Endothelial cell of umbilical vein (primary cell): ENCODE measurements at regions of chr17 and their contacts with region 1.

Region 1: GRCh38 chr17:65100316-65101140 is 36.6 kb upstream of the RGS9 start:
- DNase-seq: peak; percentile 66
- H3K4me3 ChIP-seq: peak overlapping the region; percentile 20 to 37 (median 32)
- H3K27ac ChIP-seq: no peak overlapping the region
- H3K4me1 ChIP-seq: peaks cover 8% of the 10 kb centered on the region
- H3K27me3 ChIP-seq: peaks cover 0 to 5% of the 10 kb centered on the region in 2 experiments
- CTCF ChIP-seq: peak; percentile 82 to 88
- POLR2A ChIP-seq: no peak

Region 2: GRCh38 chr17:64773836-64774761 is 326.4 kb before region 1 on chr17:
- CTCF ChIA-PET with region 1: no interaction called
- POLR2A ChIA-PET with region 1: no interaction called
- dilution Hi-C with region 1: no loop called
- intact Hi-C with region 1: no loop called
- DNase-seq: peak; percentile 40
- H3K4me3 ChIP-seq: no peak overlapping the region
- H3K27ac ChIP-seq: no peak overlapping the region
- H3K4me1 ChIP-seq: peaks cover 22% of the 10 kb centered on the region
- H3K27me3 ChIP-seq: no peaks in the 10 kb centered on the region
- CTCF ChIP-seq: peak; percentile 30 to 56
- POLR2A ChIP-seq: no peak

Region 3: GRCh38 chr17:64984851-64985521 is 115.5 kb before region 1 on chr17:
- CTCF ChIA-PET with region 1: no interaction called
- POLR2A ChIA-PET with region 1: no interaction called
- dilution Hi-C with region 1: no loop called
- intact Hi-C with region 1: no loop called
- DNase-seq: peak; percentile 34
- H3K4me3 ChIP-seq: no peak overlapping the region
- H3K27ac ChIP-seq: no peak overlapping the region
- H3K4me1 ChIP-seq: no peaks in the 10 kb centered on the region
- H3K27me3 ChIP-seq: no peaks in the 10 kb centered on the region
- CTCF ChIP-seq: no peak
- POLR2A ChIP-seq: no peak

Region 4: DNA sequence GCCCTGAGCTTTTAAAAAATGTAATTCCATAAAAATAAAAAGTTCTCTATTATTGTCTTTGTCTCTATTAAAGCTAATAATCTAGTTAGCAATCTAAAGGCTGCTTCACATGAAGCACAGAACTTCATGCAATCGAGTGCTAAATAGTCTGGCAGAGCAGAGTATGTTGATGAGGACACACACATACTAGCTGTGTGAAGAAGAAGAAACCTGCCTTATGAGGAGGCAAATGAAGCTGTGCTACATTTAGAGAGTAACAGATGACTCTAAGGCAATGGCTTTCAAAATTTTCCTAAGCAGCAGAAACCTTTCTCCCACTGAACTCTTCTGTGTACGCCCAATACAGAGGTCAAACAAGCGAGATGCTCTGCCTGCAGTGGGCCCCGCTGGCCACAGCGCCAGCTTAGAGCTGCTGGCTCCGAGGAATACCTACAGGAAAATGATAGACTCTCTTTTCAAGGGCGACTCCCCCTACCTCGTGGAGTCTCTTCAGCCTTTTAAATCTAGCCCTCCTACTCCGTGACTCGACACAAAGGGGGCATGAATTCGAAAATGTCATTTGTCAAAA is 83.2 kb before region 1 on chr17:
- CTCF ChIA-PET with region 1: interaction called, 3 read pairs
- POLR2A ChIA-PET with region 1: no interaction called
- dilution Hi-C with region 1: no loop called
- intact Hi-C with region 1: loop called (anchors 5 kb)
- DNase-seq: no peak
- H3K4me3 ChIP-seq: no peak overlapping the region
- H3K27ac ChIP-seq: no peak overlapping the region
- H3K4me1 ChIP-seq: no peaks in the 10 kb centered on the region
- H3K27me3 ChIP-seq: no peaks in the 10 kb centered on the region
- CTCF ChIP-seq: no peak
- POLR2A ChIP-seq: no peak

Region 5: DNA sequence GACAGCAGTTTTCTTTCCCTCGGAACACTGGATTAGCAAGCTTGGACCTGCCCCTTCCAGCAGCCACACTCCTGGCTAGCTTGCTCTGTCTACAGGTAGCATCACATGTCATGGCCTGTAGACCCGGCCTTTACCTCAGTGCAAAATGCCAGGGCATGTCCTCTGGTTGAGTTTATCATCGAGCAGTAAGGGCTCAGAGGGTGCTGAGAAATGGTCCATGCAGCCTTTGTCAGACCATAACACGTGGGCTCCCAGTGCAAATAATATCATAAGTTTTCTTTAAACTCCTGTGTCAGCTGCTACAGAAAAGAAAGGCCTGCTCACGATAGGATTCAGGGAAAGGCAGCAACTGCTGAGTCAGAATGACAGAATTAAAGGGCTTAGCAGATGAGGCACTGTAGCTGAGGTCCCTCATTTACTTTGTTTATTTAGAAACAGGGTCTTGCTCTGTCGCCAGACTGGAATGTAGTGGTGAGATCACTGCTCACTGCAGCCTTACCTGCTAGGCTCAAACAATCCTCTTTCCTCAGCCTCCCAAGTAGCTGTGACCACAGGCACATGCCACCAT is 36.0 kb before region 1 on chr17:
- CTCF ChIA-PET with region 1: interaction called, 17 read pairs
- POLR2A ChIA-PET with region 1: interaction called, 9 read pairs
- dilution Hi-C with region 1: no loop called
- intact Hi-C with region 1: no loop called
- DNase-seq: no peak
- H3K4me3 ChIP-seq: no peak overlapping the region
- H3K27ac ChIP-seq: no peak overlapping the region
- H3K4me1 ChIP-seq: no peaks in the 10 kb centered on the region
- H3K27me3 ChIP-seq: peaks cover 9 to 10% of the 10 kb centered on the region in 2 experiments
- CTCF ChIP-seq: no peak
- POLR2A ChIP-seq: no peak

Region 6: GRCh38 chr17:65085397-65085796 is 15.1 kb before region 1 on chr17:
- CTCF ChIA-PET with region 1: interaction called, 43 read pairs
- POLR2A ChIA-PET with region 1: no interaction called
- dilution Hi-C with region 1: no loop called
- intact Hi-C with region 1: no loop called
- DNase-seq: no peak
- H3K4me3 ChIP-seq: no peak overlapping the region
- H3K27ac ChIP-seq: no peak overlapping the region
- H3K4me1 ChIP-seq: no peaks in the 10 kb centered on the region
- H3K27me3 ChIP-seq: peaks cover 31 to 37% of the 10 kb centered on the region in 2 experiments
- CTCF ChIP-seq: no peak
- POLR2A ChIP-seq: no peak

Region 7: DNA sequence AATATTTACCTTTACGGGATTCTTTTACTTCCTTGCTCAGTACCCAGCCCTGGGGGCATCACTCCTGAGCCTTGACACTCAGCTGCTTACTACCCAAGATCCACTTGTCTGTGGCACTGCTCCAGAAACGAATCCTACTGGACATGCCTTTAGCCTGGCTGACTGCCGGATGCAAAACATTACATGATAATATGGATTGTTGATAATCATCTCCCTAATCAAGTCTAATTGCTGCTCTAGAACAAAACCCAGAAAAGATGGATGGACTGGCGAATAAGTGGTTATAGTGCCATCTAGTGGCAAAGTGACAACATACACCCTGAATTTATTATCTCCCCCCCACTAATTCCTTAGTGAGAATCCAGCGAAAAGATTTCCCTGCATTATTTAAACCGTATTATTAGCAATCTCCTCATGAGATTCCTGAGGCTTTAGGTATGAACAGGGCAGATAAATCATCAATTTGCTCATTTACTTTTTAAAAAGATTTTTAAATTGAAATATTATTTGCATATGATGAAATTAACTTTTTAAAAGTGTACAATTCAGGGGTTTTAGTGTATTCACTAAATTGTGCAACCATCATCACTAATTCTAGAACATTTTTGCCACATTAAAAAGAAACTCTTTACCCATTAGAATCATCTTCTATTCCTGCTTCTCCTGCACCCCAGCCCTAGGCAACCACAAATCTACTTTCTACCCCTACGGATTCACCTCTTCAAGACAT is 98.3 kb after region 1 on chr17:
- CTCF ChIA-PET with region 1: interaction called, 17 read pairs
- POLR2A ChIA-PET with region 1: no interaction called
- dilution Hi-C with region 1: no loop called
- intact Hi-C with region 1: loop called (anchors 2 kb)
- DNase-seq: peak; percentile 67
- H3K4me3 ChIP-seq: no peak overlapping the region
- H3K27ac ChIP-seq: no peak overlapping the region
- H3K4me1 ChIP-seq: no peaks in the 10 kb centered on the region
- H3K27me3 ChIP-seq: peaks cover 0 to 4% of the 10 kb centered on the region in 2 experiments
- CTCF ChIP-seq: peak; percentile 41 to 54
- POLR2A ChIP-seq: no peak